CD4-positive, alpha-beta T cell (primary cell): ENCODE measurements at regions of chr17 and their contacts with region 1.

Region 1: DNA sequence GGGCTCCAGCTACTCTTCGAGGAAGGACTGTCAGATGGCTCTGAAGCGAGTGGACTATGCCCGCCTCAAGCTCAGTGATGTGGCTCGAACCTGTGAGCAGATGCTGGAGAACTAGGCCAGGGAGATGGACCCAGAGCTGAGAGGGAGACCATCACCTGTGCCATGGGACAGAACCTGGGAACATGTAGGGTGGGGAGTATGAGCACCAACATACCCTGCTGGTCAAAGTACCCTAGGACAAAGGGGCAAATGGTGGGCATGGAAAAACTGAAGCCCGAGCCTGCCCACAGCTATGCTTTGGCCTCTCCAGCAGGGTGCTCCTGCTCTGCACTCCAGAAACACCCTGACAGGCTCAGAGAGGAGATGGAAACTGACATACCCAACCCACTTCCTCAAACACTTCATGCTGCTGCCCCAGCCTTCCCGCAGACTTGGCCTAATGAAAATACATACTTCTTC is 1.9 kb downstream of the MED11 start:
- DNase-seq: peak in 3 of 14 experiments; percentile 42 to 68 (median 55)
- ATAC-seq: no peak
- H3K4me3 ChIP-seq: no peak overlapping the region
- H3K4me3 Mint-ChIP-seq: peak overlapping the region; percentile 1
- H3K27ac ChIP-seq: no peak overlapping the region
- H3K27ac Mint-ChIP-seq: peak overlapping the region; percentile 5
- H3K4me1 ChIP-seq: peaks cover 29% of the 10 kb centered on the region
- H3K4me1 Mint-ChIP-seq: peaks cover 24% of the 10 kb centered on the region
- H3K27me3 ChIP-seq: no peaks in the 10 kb centered on the region
- H3K27me3 Mint-ChIP-seq: no peaks in the 10 kb centered on the region
- CTCF ChIP-seq: no peak

Region 2: GRCh38 chr17:4796553-4796921 is 63.4 kb after region 1 on chr17:
- CTCF ChIA-PET with region 1: interaction called, 3 read pairs
- POLR2A ChIA-PET with region 1: interaction called, 3 read pairs
- intact Hi-C with region 1: loop called in 1 of 2 experiments (anchors 2 kb)
- DNase-seq: peak in 2 of 14 experiments; percentile 19 to 33
- ATAC-seq: no peak
- H3K4me3 ChIP-seq: peak overlapping the region; percentile 69
- H3K4me3 Mint-ChIP-seq: peak overlapping the region; percentile 99
- H3K27ac ChIP-seq: peak overlapping the region; percentile 50 to 56
- H3K27ac Mint-ChIP-seq: peak overlapping the region; percentile 84
- H3K4me1 ChIP-seq: peaks cover 20% of the 10 kb centered on the region
- H3K4me1 Mint-ChIP-seq: peaks cover 15% of the 10 kb centered on the region
- H3K27me3 ChIP-seq: no peaks in the 10 kb centered on the region
- H3K27me3 Mint-ChIP-seq: peaks cover 4% of the 10 kb centered on the region
- CTCF ChIP-seq: no peak

Region 3: DNA sequence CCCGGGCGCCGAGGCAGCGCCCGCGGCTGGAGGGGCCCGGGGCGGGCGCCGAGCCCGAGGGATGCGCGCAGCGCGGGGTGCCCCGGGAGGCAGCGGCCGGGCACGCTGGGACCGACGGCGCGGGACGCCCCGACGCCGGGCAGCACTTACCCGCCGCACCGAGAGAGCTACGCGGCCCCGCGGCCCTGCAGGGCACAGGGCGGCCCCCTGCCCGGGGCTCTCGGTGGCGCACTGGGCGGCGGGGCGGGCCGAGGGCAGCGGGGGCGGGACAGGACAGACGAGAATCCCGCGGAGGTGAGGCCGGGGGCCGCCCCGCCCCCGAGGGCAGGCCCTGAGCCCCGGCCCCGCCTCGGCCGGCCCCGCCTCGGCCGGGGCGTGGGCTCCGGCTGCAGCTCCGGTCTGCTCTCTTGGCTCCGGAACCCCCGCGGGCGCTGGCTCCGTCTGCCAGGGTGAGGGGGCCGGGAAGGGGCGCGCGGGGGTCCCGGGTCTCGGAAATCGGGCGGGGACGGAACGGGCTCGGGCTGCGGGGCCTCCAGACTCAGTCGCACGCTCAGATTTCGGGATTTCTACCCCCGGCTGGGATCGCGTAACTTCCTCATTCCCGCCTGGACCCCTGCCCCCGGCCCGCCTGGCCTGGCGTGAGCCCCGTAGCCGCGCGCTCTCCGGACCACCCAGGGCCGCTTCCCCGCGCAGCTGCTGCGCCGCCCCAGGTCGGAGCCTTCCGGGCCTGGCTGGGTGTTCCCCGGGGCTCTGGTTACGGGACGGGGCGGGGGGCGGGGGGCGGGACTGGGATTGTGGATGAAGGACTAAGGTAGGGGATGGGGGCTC is 73.9 kb after region 1 on chr17 and contains the start of gene PLD2:
- CTCF ChIA-PET with region 1: no interaction called
- POLR2A ChIA-PET with region 1: no interaction called
- intact Hi-C with region 1: loop called in 1 of 2 experiments (anchors 2 kb)
- DNase-seq: peak; percentile 68 to 94 (median 84)
- ATAC-seq: peak; percentile 98
- H3K4me3 ChIP-seq: peak within 1 kb of the TSS; percentile 57
- H3K4me3 Mint-ChIP-seq: peak within 1 kb of the TSS; percentile 87
- H3K27ac ChIP-seq: no peak within 1 kb of the TSS
- H3K27ac Mint-ChIP-seq: no peak within 1 kb of the TSS
- H3K4me1 ChIP-seq: peaks cover 12% of the 10 kb centered on the region
- H3K4me1 Mint-ChIP-seq: peaks cover 21% of the 10 kb centered on the region
- H3K27me3 ChIP-seq: no peaks in the 10 kb centered on the region
- H3K27me3 Mint-ChIP-seq: no peaks in the 10 kb centered on the region
- CTCF ChIP-seq: no peak
- total RNA-seq, gene PLD2: 10.2 to 10.7 TPM

Region 4: DNA sequence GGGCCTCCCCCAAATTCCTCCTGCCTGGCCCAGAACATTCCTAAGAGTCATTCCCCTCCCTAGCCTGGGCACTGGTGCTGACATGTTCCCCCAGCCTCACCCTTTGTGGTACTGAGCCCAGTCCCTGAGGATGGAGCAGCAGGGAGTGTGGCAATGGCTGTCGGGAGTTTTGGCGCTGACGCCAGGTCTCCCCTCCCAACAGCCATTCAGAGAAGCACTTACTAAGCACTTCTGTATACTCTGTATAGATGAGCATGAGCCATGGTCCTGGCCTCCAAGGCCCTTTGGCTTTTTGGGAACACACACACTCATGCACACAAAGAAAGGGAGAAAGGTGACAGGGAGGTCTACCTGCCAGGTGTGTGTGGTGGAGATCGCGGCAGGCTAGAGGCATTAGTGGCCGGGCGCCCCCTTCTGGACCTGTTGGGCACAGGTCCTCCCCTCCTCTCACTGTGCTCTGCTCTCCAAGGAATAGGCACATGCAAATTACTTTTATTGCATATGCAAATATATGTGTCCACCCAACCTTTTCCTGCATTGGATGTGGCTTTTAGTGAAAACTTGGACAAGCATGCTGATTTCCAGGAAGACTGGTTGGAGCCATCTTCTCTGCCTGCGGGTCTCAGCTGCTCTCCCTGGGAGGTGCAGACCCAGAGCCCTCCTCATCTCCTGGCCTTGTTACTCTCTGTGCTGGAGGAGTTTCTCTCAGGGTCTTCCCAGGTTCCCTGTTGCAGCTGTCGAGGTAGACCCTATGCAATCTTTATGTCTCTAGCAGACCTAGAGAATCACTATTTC is 148.9 kb after region 1 on chr17:
- CTCF ChIA-PET with region 1: interaction called, 5 read pairs
- POLR2A ChIA-PET with region 1: no interaction called
- intact Hi-C with region 1: loop called (anchors 1 kb)
- DNase-seq: peak; percentile 59 to 83 (median 69)
- ATAC-seq: peak; percentile 97
- H3K4me3 ChIP-seq: no peak overlapping the region
- H3K4me3 Mint-ChIP-seq: no peak overlapping the region
- H3K27ac ChIP-seq: no peak overlapping the region
- H3K27ac Mint-ChIP-seq: no peak overlapping the region
- H3K4me1 ChIP-seq: peaks cover 2% of the 10 kb centered on the region
- H3K4me1 Mint-ChIP-seq: no peaks in the 10 kb centered on the region
- H3K27me3 ChIP-seq: no peaks in the 10 kb centered on the region
- H3K27me3 Mint-ChIP-seq: no peaks in the 10 kb centered on the region
- CTCF ChIP-seq: peak; percentile 90

Region 5: DNA sequence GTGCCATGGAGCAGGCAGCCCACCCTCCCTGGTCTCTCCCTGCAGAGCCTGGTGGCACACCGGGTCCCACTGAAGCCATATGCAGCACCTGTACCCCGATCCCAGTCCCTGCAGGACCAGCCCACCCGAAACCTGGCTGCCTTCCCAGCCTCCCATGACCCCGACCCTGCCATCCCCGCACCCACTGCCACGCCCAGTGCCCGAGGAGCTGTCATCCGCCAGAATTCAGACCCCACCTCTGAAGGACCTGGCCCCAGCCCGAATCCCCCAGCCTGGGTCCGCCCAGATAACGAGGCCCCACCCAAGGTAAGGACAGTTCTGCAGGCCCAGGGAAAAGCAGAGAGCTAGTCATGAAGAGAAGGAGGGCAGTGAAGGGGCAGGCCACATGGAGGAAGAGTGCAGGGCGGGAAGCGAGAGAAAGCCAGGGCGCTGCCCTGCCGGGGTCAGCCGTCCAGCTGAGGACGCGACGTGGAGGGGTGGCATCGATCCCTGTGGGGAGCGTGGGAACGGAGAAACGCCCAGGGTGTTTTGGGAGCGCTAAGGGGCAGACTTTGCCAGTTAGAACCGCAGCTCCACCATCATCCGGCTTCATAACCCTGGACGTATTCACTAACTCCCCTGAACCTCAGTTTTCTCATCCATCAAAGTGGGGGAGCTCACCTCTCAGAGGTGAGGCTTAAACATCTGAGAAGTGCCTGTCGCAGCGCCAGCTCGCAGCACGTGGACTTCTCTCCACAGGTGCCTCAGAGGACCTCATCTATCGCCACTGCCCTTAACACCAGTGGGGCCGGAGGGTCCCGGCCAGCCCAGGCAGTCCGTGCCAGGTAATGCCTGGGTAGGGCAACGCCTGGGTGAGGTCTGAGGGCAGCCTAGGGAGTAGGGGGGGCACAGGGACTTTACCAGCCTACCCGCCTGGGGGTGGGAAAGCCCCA is 158.6 kb after region 1 on chr17:
- CTCF ChIA-PET with region 1: no interaction called
- POLR2A ChIA-PET with region 1: no interaction called
- intact Hi-C with region 1: loop called (anchors 1 to 2 kb)
- DNase-seq: peak in 1 of 14 experiments; percentile 31
- ATAC-seq: no peak
- H3K4me3 ChIP-seq: no peak overlapping the region
- H3K4me3 Mint-ChIP-seq: no peak overlapping the region
- H3K27ac ChIP-seq: no peak overlapping the region
- H3K27ac Mint-ChIP-seq: no peak overlapping the region
- H3K4me1 ChIP-seq: peaks cover 2% of the 10 kb centered on the region
- H3K4me1 Mint-ChIP-seq: peaks cover 5% of the 10 kb centered on the region
- H3K27me3 ChIP-seq: no peaks in the 10 kb centered on the region
- H3K27me3 Mint-ChIP-seq: no peaks in the 10 kb centered on the region
- CTCF ChIP-seq: no peak

Region 6: DNA sequence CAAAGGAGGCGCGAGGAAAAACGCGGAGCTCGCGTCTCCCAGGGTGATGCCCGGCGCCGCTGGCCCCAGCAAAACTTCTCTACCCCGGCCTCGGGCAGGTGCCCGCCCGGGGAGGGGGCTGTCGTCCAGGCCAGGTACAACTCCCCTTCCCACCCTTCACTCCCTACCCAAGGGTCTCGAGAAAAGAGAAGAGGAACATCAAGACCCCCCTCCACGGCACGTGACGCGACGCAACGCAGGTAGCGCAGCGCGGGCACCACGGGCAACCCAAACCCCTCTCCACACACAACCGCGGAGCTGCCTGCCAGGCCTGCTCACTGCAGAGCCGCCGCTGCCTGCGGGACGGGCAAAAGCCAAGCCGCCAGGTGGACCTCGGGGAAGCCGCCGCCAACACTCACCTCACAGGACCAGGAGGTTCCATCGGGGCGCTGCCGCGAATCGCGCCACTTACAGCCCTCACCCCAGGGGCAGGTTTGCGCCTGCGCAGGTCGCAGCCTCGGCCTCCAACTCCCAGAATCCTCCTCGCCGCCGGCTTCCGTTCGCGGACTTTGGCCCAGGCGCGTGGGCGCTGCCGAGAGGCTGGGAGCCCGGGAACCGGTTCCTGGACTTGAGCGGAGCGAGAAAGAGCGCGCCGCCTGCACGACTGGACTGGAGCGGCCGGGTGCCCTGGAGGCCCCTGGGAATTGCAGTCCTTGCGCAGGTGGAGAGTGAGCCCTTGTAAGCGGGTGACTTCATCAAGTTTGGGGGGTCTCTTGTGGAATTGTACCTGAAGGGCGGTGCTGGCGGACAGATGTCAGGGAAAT is 378.5 kb after region 1 on chr17 and contains the start of gene ZNF232:
- CTCF ChIA-PET with region 1: no interaction called
- POLR2A ChIA-PET with region 1: no interaction called
- intact Hi-C with region 1: loop called in 1 of 2 experiments (anchors 2 kb)
- DNase-seq: peak; percentile 79 to 95 (median 86)
- ATAC-seq: peak; percentile 89
- H3K4me3 ChIP-seq: peak within 1 kb of the TSS; percentile 92
- H3K4me3 Mint-ChIP-seq: peak within 1 kb of the TSS; percentile 92
- H3K27ac ChIP-seq: peak within 1 kb of the TSS; percentile 16 to 61
- H3K27ac Mint-ChIP-seq: peak within 1 kb of the TSS; percentile 65
- H3K4me1 ChIP-seq: peaks cover 29% of the 10 kb centered on the region
- H3K4me1 Mint-ChIP-seq: peaks cover 49% of the 10 kb centered on the region
- H3K27me3 ChIP-seq: peaks cover 14 to 19% of the 10 kb centered on the region in 2 experiments
- H3K27me3 Mint-ChIP-seq: peaks cover 31% of the 10 kb centered on the region
- CTCF ChIP-seq: no peak
- total RNA-seq, gene ZNF232: 2.1 to 3.6 TPM